Activated CD4-positive, alpha-beta T cell treated with anti-CD3 and anti-CD28 coated beads for 36 hours (primary cell): ENCODE measurements at regions of chr9 and their contacts with region 1.

Region 1: DNA sequence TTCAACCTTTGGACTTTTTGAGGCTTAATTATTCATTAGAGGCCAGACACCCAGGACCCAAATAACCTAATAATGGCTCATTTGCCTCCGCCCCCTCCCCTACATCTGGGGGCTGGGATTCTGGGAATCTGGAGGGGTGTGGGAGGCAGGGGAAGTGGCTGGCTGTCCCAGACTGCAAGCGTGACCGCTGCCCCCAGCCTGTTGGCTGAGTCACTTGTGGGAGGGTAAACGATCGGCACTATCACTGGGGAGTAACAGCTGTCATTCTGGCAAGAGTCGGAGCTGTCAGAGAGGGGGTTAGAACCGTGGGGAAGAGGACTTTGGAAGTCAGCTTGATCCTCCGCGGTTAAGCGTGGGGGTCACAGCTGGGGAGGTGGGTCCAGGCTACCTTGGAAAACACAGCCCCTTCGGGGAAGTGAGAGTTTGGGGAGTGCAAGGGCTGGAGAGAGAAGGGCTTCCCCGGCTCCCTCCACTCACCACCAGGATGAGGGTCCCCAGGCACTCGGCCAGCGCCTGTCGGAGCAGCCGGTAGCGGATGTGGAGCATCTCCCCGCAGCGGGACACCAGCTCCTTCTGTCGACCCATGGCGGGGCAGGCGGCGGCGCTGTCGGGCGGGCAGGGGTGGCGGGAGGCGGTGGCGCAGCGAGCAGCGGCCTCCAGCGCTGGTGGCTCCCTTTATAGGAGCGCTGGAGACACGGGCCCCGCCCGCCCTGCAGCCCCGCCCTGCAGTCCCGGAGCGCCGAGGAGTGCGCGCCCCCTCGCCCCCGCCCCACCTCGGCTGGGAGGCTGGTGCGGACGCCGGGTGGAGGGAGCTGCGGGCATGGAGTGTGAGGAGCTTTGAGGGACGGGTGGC is at the start of gene AQP3:
- DNase-seq: peak; percentile 85
- ATAC-seq: peak; percentile 68
- H3K4me3 Mint-ChIP-seq: peak within 1 kb of the TSS; percentile 79
- H3K27ac Mint-ChIP-seq: peak within 1 kb of the TSS; percentile 93
- H3K4me1 Mint-ChIP-seq: peaks cover 43% of the 10 kb centered on the region
- H3K27me3 Mint-ChIP-seq: no peaks in the 10 kb centered on the region
- total RNA-seq, gene AQP3: 8.5 to 11.3 TPM

Region 2: GRCh38 chr9:33159760-33160127 is 287.4 kb before region 1 on chr9:
- CTCF ChIA-PET with region 1: no interaction called
- POLR2A ChIA-PET with region 1: no interaction called
- intact Hi-C with region 1: loop called in 1 of 2 experiments (anchors 2 kb)
- DNase-seq: peak; percentile 83
- ATAC-seq: peak; percentile 80
- H3K4me3 Mint-ChIP-seq: peak overlapping the region; percentile 61
- H3K27ac Mint-ChIP-seq: peak overlapping the region; percentile 94
- H3K4me1 Mint-ChIP-seq: peaks cover 93% of the 10 kb centered on the region
- H3K27me3 Mint-ChIP-seq: no peaks in the 10 kb centered on the region

Region 3: GRCh38 chr9:33320568-33321261 is 126.5 kb before region 1 on chr9:
- CTCF ChIA-PET with region 1: no interaction called
- POLR2A ChIA-PET with region 1: no interaction called
- intact Hi-C with region 1: loop called in 1 of 2 experiments (anchors 1 kb)
- DNase-seq: peak; percentile 22
- ATAC-seq: peak; percentile 85
- H3K4me3 Mint-ChIP-seq: no peak overlapping the region
- H3K27ac Mint-ChIP-seq: peak overlapping the region; percentile 80
- H3K4me1 Mint-ChIP-seq: peaks cover 21% of the 10 kb centered on the region
- H3K27me3 Mint-ChIP-seq: no peaks in the 10 kb centered on the region

Region 4: GRCh38 chr9:33415501-33416038 is 31.6 kb before region 1 on chr9:
- CTCF ChIA-PET with region 1: interaction called, 36 read pairs
- POLR2A ChIA-PET with region 1: no interaction called
- intact Hi-C with region 1: loop called (anchors 1 kb)
- DNase-seq: peak; percentile 97
- ATAC-seq: peak; percentile 92
- H3K4me3 Mint-ChIP-seq: peak overlapping the region; percentile 31
- H3K27ac Mint-ChIP-seq: peak overlapping the region; percentile 95
- H3K4me1 Mint-ChIP-seq: peaks cover 41% of the 10 kb centered on the region
- H3K27me3 Mint-ChIP-seq: no peaks in the 10 kb centered on the region

Region 5: GRCh38 chr9:33466565-33467495 is 19.7 kb after region 1 on chr9:
- CTCF ChIA-PET with region 1: interaction called, 45 read pairs
- POLR2A ChIA-PET with region 1: interaction called, 3 read pairs
- intact Hi-C with region 1: loop called in 1 of 2 experiments (anchors 2 kb)
- DNase-seq: peak; percentile 85
- ATAC-seq: peak; percentile 88
- H3K4me3 Mint-ChIP-seq: no peak overlapping the region
- H3K27ac Mint-ChIP-seq: no peak overlapping the region
- H3K4me1 Mint-ChIP-seq: peaks cover 10% of the 10 kb centered on the region
- H3K27me3 Mint-ChIP-seq: no peaks in the 10 kb centered on the region

Region 6: GRCh38 chr9:33489066-33489465 is 41.9 kb after region 1 on chr9:
- CTCF ChIA-PET with region 1: no interaction called
- POLR2A ChIA-PET with region 1: no interaction called
- intact Hi-C with region 1: no loop called
- DNase-seq: no peak
- ATAC-seq: no peak
- H3K4me3 Mint-ChIP-seq: no peak overlapping the region
- H3K27ac Mint-ChIP-seq: no peak overlapping the region
- H3K4me1 Mint-ChIP-seq: no peaks in the 10 kb centered on the region
- H3K27me3 Mint-ChIP-seq: no peaks in the 10 kb centered on the region